Astrocyte of the cerebellum (primary cell): ENCODE measurements at regions of chr4 and their contacts with region 1.

Region 1: GRCh38 chr4:71593306-71593705 is 190.6 kb downstream of the GC start:
- DNase-seq: no peak
- H3K4me3 ChIP-seq: no peak overlapping the region
- CTCF ChIP-seq: no peak

Region 2: DNA sequence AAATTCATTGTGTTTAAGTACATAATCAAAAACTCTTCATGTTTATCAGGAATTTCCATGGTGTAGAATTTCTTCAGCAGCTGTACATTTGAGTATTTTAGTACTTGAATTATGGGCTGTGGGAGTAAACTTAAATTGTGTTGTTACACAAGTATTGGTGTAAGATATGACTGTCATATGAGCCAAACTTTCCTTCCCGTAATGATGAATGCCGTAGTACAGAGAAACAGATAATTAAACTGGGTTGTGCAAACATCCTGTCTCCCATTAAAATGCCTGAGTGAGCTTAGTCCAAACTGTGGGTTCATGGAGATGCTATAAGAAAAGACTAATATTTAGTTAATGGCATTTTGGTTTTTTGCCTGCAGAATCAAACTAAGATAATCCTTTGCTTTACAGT is 95.3 kb before region 1 on chr4:
- in situ Hi-C with region 1: no loop called
- DNase-seq: no peak
- H3K4me3 ChIP-seq: no peak overlapping the region
- CTCF ChIP-seq: no peak

Region 3: DNA sequence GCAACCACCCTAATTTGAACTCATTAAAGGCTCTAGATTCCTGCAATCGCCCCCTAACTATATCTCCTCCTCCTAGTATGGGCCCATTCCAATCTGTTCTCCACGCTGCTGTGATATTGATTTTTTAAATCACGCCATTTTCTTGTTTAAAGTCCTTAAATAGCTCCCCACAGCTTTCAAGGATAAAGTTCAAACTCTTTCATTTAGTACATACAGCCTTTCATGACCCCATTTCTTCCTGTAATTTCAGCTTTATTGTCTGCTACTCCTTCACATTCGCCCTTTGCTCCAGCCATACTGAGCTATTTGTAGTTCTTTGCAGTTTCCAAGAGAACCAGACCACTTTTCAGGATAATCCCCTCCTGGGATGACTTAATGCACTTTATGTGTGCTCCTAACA is 72.1 kb after region 1 on chr4:
- in situ Hi-C with region 1: loop called (anchors 5 kb)
- DNase-seq: no peak
- H3K4me3 ChIP-seq: no peak overlapping the region
- CTCF ChIP-seq: no peak